MCF 10A (cell line): ENCODE measurements at regions of chr9 and their contacts with region 1.

Region 1: DNA sequence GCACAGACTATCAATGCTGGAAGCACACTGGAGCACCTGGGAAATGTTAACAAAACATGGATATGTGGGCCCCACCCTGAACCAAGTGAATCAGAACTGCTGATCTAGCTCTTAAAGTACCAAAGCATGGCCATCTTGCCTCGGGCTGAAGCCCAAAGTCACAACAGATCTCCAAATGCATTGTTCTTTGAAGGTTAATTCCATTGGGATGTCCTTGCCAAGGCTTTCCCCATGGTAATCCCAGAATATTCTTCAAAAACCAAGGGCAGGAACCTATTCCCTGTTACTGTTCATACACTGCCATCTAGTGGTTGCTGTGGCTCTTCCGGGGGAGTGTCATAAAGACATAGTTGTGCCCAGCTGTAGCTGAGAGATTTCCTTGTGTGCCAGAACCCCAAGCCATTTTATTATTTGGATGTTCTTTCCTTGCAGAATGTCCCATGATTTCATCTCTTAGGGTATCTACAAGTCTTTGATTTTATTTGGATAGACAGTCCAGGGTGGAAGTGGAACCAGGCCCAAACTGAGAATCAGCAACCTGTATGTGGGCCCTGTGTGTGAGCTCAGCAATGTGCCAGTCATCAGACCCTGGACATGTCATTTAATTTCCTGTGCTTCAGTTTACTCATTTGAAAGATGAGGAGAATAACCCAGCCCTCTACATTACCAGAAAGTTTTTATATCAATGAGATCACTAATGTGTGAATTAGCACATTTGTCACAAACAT is 290.0 kb downstream of the ACTL7B start:
- DNase-seq: peak; percentile 92
- H3K4me3 Mint-ChIP-seq: no peak overlapping the region
- H3K27ac Mint-ChIP-seq: peak overlapping the region; percentile 29
- H3K4me1 Mint-ChIP-seq: peaks cover 56% of the 10 kb centered on the region
- H3K27me3 Mint-ChIP-seq: no peaks in the 10 kb centered on the region
- CTCF ChIP-seq: peak; percentile 75

Region 2: DNA sequence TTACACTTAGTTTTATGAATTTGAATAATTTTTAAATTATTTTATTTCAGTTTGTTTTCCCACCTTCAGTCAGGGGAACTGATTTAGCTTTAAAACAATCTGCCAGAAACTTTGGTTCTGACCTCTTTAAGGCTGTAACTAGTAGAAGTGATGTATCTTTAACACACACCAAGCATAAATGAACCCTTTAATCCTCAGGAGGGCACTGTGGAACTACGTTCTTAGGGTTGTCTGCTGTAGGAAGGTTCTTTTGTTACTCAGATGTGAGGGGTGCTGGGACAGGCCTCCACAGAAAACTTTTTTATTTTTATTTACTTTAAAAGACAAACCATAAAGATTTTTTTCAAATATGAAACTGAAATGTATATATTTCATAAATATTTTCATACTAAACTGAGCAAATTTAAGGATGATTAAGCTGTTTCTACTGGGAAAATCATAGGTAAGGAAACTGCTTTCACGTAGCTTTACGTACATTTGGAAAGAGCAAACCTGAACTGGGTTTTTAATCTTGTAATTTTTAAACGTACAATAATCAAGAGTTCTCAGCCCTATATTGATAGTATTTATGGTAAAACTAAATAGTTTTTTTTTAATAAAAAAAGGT is 1081.6 kb before region 1 on chr9:
- CTCF ChIA-PET with region 1: interaction called, 9 read pairs
- POLR2A ChIA-PET with region 1: interaction called, 67 read pairs
- intact Hi-C with region 1: loop called (anchors 1 kb)
- DNase-seq: peak; percentile 81
- H3K4me3 Mint-ChIP-seq: no peak overlapping the region
- H3K27ac Mint-ChIP-seq: no peak overlapping the region
- H3K4me1 Mint-ChIP-seq: peaks cover 31% of the 10 kb centered on the region
- H3K27me3 Mint-ChIP-seq: no peaks in the 10 kb centered on the region
- CTCF ChIP-seq: peak; percentile 55

Region 3: DNA sequence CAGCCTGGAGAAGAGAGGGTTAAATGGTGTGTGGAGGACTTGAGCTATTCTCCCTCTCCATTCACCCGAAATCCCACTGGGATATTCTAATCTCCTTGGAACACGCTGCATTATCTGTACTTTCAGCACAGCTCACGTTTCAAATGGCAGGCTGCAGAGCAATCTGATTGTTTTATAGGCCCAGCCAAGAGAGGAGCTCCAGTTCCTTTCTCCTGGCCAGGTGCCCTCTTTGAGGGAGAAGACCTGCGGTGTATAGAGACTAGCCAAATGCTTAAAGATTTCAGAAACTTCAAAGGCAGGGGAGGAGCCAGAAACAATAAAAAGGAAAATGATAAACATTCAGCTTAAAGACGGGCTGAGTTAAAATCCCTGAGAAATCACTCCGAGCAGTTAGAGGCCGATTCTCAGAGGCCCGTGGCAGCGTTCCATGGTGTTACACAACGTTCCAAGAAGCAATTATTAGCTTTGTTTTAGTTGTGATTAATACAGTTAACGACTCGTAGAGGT is 512.2 kb before region 1 on chr9:
- CTCF ChIA-PET with region 1: interaction called, 6 read pairs
- POLR2A ChIA-PET with region 1: interaction called, 12 read pairs
- intact Hi-C with region 1: loop called (anchors 1 kb)
- DNase-seq: peak; percentile 94
- H3K4me3 Mint-ChIP-seq: peak overlapping the region; percentile 61
- H3K27ac Mint-ChIP-seq: peak overlapping the region; percentile 99
- H3K4me1 Mint-ChIP-seq: peaks cover 72% of the 10 kb centered on the region
- H3K27me3 Mint-ChIP-seq: no peaks in the 10 kb centered on the region
- CTCF ChIP-seq: no peak

Region 4: GRCh38 chr9:108444400-108445358 is 121.1 kb before region 1 on chr9:
- CTCF ChIA-PET with region 1: interaction called, 6 read pairs
- POLR2A ChIA-PET with region 1: interaction called, 12 read pairs
- intact Hi-C with region 1: loop called (anchors 1 kb)
- DNase-seq: peak; percentile 88
- H3K4me3 Mint-ChIP-seq: peak overlapping the region; percentile 62
- H3K27ac Mint-ChIP-seq: peak overlapping the region; percentile 63
- H3K4me1 Mint-ChIP-seq: peaks cover 40% of the 10 kb centered on the region
- H3K27me3 Mint-ChIP-seq: no peaks in the 10 kb centered on the region
- CTCF ChIP-seq: no peak

Region 5: DNA sequence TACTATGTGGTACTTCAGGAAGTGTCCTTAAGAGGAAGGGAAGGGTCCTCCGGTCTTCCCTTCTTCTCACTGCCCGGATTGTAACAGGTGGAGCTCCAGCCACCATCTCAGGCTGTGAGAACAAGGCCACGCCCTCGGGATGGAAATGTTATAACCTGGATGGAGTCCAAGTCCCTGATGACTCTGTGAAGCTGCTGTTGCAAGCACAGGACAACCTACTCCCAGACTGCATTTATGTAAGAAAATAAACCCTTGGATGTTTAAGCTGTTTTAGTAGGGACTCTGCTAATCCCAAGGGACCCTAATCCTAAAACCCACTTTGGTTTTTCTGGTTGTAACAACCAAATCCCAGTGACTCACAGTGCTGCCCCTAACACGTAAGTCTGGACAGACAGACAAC is 68.4 kb after region 1 on chr9:
- CTCF ChIA-PET with region 1: interaction called, 4 read pairs
- POLR2A ChIA-PET with region 1: interaction called, 36 read pairs
- intact Hi-C with region 1: no loop called
- DNase-seq: peak; percentile 89
- H3K4me3 Mint-ChIP-seq: peak overlapping the region; percentile 59
- H3K27ac Mint-ChIP-seq: peak overlapping the region; percentile 98
- H3K4me1 Mint-ChIP-seq: peaks cover 20% of the 10 kb centered on the region
- H3K27me3 Mint-ChIP-seq: no peaks in the 10 kb centered on the region
- CTCF ChIP-seq: no peak

Region 6: GRCh38 chr9:108813951-108814601 is 248.3 kb after region 1 on chr9:
- CTCF ChIA-PET with region 1: interaction called, 3 read pairs
- POLR2A ChIA-PET with region 1: interaction called, 3 read pairs
- intact Hi-C with region 1: loop called (anchors 1 kb)
- DNase-seq: peak; percentile 81
- H3K4me3 Mint-ChIP-seq: no peak overlapping the region
- H3K27ac Mint-ChIP-seq: peak overlapping the region; percentile 56
- H3K4me1 Mint-ChIP-seq: peaks cover 9% of the 10 kb centered on the region
- H3K27me3 Mint-ChIP-seq: no peaks in the 10 kb centered on the region
- CTCF ChIP-seq: peak; percentile 92